CD8-positive, alpha-beta T cell (primary cell): ENCODE measurements at regions of chr11 and their contacts with region 1.

Region 1: DNA sequence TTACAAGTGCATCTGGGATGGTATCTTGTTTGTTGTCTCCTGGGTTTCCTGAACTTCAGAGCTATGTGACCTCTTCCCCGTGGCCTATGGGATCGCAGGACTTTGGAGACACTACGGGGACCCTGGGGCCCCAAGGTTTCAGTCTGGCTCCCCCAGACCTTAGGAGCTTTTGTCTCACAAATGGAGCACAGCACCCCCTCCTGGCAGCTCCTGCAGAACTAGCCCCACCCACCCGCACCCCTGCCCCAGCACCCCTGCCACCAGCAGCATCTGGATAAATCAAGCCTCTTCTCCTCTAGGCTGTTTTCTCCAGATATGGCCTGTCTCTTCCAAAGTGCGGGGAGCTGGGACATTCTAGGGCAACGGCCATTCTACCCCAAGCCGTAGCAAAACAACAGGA is 10.4 kb downstream of the RCOR2 start:
- DNase-seq: peak; percentile 28 to 74 (median 68)
- ATAC-seq: peak; percentile 77
- H3K4me3 ChIP-seq: no peak overlapping the region
- H3K4me3 Mint-ChIP-seq: no peak overlapping the region
- H3K27ac ChIP-seq: no peak overlapping the region
- H3K27ac Mint-ChIP-seq: no peak overlapping the region
- H3K4me1 ChIP-seq: no peaks in the 10 kb centered on the region
- H3K4me1 Mint-ChIP-seq: peaks cover 3% of the 10 kb centered on the region
- H3K27me3 ChIP-seq: no peaks in the 10 kb centered on the region
- H3K27me3 Mint-ChIP-seq: no peaks in the 10 kb centered on the region
- CTCF ChIP-seq: peak; percentile 38

Region 2: DNA sequence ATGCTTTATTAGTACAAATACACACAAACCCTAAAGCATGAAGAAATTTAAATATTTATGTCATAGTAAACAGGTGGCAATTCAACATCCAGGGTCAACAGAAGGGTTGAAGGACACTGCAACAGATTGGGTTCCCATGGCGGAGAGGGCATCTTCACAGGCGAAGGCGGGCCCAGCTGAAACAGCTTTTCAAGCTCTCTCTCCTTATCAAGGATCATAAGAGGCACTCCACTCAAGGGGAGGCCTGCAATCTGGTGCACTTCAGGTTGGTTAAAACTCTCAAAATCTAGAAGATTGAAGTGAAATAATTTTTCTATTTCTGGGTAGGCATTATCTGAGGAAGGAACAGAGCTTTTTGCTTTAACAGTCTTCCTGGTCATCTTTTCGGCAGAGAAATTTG is 874.1 kb before region 1 on chr11:
- CTCF ChIA-PET with region 1: no interaction called
- POLR2A ChIA-PET with region 1: no interaction called
- intact Hi-C with region 1: loop called in 1 of 2 experiments (anchors 10 kb)
- DNase-seq: no peak
- ATAC-seq: no peak
- H3K4me3 ChIP-seq: no peak overlapping the region
- H3K4me3 Mint-ChIP-seq: no peak overlapping the region
- H3K27ac ChIP-seq: no peak overlapping the region
- H3K27ac Mint-ChIP-seq: no peak overlapping the region
- H3K4me1 ChIP-seq: no peaks in the 10 kb centered on the region
- H3K4me1 Mint-ChIP-seq: no peaks in the 10 kb centered on the region
- H3K27me3 ChIP-seq: peaks cover 0 to 3% of the 10 kb centered on the region in 2 experiments
- H3K27me3 Mint-ChIP-seq: peaks cover 30% of the 10 kb centered on the region
- CTCF ChIP-seq: no peak

Region 3: GRCh38 chr11:64152841-64153691 is 246.5 kb after region 1 on chr11:
- CTCF ChIA-PET with region 1: no interaction called
- POLR2A ChIA-PET with region 1: no interaction called
- intact Hi-C with region 1: loop called in 1 of 2 experiments (anchors 5 kb)
- DNase-seq: peak; percentile 50 to 84 (median 71)
- ATAC-seq: peak; percentile 98
- H3K4me3 ChIP-seq: no peak overlapping the region
- H3K4me3 Mint-ChIP-seq: no peak overlapping the region
- H3K27ac ChIP-seq: no peak overlapping the region
- H3K27ac Mint-ChIP-seq: no peak overlapping the region
- H3K4me1 ChIP-seq: no peaks in the 10 kb centered on the region
- H3K4me1 Mint-ChIP-seq: peaks cover 4% of the 10 kb centered on the region
- H3K27me3 ChIP-seq: no peaks in the 10 kb centered on the region
- H3K27me3 Mint-ChIP-seq: peaks cover 2% of the 10 kb centered on the region
- CTCF ChIP-seq: peak; percentile 99